ENCODE measurements at regions of chr21 and their contacts with region 1.

Region 1: DNA sequence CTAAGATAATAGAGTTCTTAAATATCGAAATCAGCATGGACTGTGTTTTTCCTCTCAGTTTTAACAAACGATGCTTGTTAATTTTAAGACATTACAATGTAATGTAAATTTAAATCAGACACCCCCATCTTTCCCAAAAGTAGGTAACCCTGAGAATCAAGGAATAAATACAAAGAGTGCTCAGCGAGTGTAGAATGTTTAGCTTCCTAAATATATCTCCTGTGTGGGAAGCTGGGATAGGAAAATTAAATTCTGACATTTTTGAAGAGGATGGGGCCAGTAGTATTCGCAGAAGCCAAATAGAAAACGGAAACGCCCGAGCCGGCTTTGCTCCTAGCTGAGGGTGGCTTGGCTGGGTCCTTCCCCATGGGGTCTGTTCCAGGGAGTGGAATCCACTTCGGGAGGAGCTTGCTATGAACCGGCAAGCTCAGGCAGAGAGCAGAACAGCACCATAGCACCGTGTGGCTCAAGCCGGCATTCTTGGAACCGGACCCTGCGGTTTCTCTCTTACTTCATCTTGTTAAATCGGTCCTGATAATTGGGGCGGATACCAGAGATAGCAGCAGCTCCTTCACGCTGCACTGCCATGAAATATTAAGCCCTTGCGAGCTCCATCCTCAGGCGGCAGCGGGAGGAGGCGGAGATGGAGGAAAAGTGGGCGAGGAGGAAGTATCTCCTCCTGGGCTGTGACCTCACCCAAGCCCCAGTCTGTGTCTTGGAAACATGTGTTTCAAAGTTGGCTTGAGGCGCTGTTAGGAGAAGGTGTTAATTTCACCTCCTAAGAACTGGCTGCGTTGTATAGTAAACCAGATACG is 24.9 kb downstream of the MAP3K7CL start:
- DNase-seq: no peak
- ATAC-seq: no peak
- H3K4me3 Mint-ChIP-seq: no peak overlapping the region
- H3K27ac Mint-ChIP-seq: no peak overlapping the region
- H3K4me1 Mint-ChIP-seq: no peaks in the 10 kb centered on the region
- H3K27me3 Mint-ChIP-seq: no peaks in the 10 kb centered on the region
- CTCF ChIP-seq: no peak

Region 2: GRCh38 chr21:29217818-29218291 is 62.5 kb after region 1 on chr21:
- CTCF ChIA-PET with region 1: no interaction called
- POLR2A ChIA-PET with region 1: no interaction called
- intact Hi-C with region 1: loop called (anchors 10 kb)
- DNase-seq: no peak
- ATAC-seq: no peak
- H3K4me3 Mint-ChIP-seq: no peak overlapping the region
- H3K27ac Mint-ChIP-seq: no peak overlapping the region
- H3K4me1 Mint-ChIP-seq: peaks cover 3% of the 10 kb centered on the region
- H3K27me3 Mint-ChIP-seq: no peaks in the 10 kb centered on the region
- CTCF ChIP-seq: no peak

Measured in activated CD8-positive, alpha-beta T cell treated with anti-CD3 and anti-CD28 coated beads for 36 hours (primary cell).